ENCODE measurements at regions of chr6 and their contacts with region 1.

Region 1: DNA sequence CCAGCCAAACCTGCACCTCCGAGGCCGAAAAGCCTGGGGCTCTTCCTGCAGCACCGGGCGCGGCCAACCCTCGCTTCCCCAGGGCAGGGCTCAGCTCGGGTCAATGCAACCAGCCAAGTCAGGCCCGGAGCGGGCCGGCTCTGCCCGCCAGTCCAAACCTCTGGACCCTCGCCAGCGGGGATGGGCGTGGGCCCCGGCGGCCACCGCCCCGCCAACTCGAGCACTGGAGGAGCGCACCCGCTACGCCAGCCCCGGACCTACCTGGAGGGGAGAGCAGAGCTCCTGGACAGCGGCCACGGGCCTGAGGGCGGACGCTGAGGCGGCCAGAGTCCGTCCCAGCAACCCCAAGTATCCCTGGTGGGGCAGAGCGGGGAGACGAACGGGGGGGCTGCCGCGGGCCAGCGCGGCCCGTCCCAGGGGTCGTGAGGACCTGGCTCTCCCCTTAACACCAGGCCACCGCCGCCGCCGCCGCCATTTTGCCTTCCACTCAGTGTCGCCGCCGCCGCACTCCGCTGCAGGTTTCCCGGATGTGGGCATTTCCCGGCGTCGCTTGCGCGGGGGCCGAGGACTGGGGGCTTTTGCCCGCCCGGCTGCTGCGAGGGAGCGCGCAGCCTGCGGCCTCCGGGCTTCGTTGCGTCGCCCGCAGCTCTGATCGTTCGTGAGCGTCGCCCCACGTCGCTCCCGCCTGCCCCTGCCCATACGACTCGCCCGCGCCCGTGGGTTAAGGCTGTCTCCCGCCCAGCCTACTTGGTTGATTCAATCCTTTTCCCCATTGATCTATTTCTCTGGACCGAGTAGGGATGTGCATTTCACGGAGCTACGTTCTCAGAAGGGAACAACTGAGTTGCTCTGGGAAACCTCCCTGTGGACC is at the start of gene LATS1:
- H3K4me3 ChIP-seq: peak within 1 kb of the TSS; percentile 98
- H3K27ac ChIP-seq: peak within 1 kb of the TSS; percentile 92
- H3K4me1 ChIP-seq: no peaks in the 10 kb centered on the region
- CTCF ChIP-seq: peak; percentile 35; the same call in 1 of the 2 replicates

Region 2: DNA sequence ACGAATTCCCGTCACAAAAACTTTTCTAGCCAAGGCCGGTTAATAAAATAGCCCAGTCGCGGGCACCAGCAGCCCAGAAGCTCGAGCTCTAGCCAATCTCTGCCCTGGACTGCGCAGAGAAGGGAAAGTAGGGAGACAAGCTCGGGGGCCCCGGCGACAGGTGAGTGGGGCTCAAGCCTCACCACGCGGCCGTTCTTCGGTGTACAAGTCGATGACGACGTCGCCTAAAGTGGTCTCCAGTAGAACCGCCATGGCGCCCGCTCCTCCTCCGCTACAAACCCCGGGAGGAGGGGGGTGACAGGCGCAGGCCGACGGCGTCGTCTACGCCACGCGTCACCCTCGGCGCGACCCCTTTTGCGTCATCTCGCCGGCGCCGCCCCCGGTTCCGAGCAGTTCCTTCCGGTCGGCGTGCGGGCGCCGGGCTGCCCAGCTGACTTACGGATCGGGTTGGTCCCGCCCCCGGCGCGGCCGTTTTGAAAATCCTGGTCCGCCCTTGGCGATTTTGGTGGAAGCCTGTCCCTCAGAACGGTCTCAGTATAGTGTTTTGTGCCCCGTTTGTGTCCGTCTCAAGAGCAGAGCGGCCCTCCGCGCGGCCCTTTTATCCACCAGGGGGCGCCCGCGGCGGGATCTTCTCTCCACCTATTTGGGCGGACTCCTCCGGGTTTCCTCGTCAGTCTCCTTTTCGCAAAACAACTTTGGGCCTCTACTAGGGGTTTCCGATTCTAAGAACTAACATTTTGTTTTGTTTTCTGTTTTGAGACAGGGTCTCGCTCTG is 171.9 kb before region 1 on chr6 and contains the start of gene PPIL4:
- CTCF ChIA-PET with region 1: interaction called, 3 read pairs
- POLR2A ChIA-PET with region 1: interaction called, 11 read pairs
- H3K4me3 ChIP-seq: peak within 1 kb of the TSS; percentile 79
- H3K27ac ChIP-seq: peak within 1 kb of the TSS; percentile 79
- H3K4me1 ChIP-seq: peaks cover 3% of the 10 kb centered on the region; the same call in 1 of the 2 replicates
- CTCF ChIP-seq: peak; percentile 82

Region 3: GRCh38 chr6:149565527-149566409 is 152.1 kb before region 1 on chr6 and contains the start of gene GINM1:
- CTCF ChIA-PET with region 1: interaction called, 5 read pairs
- POLR2A ChIA-PET with region 1: interaction called, 12 read pairs
- H3K4me3 ChIP-seq: peak within 1 kb of the TSS; percentile 83
- H3K27ac ChIP-seq: peak within 1 kb of the TSS; percentile 90
- H3K4me1 ChIP-seq: peaks cover 22% of the 10 kb centered on the region; the same call in 1 of the 2 replicates
- CTCF ChIP-seq: peak; percentile 75

Region 4: DNA sequence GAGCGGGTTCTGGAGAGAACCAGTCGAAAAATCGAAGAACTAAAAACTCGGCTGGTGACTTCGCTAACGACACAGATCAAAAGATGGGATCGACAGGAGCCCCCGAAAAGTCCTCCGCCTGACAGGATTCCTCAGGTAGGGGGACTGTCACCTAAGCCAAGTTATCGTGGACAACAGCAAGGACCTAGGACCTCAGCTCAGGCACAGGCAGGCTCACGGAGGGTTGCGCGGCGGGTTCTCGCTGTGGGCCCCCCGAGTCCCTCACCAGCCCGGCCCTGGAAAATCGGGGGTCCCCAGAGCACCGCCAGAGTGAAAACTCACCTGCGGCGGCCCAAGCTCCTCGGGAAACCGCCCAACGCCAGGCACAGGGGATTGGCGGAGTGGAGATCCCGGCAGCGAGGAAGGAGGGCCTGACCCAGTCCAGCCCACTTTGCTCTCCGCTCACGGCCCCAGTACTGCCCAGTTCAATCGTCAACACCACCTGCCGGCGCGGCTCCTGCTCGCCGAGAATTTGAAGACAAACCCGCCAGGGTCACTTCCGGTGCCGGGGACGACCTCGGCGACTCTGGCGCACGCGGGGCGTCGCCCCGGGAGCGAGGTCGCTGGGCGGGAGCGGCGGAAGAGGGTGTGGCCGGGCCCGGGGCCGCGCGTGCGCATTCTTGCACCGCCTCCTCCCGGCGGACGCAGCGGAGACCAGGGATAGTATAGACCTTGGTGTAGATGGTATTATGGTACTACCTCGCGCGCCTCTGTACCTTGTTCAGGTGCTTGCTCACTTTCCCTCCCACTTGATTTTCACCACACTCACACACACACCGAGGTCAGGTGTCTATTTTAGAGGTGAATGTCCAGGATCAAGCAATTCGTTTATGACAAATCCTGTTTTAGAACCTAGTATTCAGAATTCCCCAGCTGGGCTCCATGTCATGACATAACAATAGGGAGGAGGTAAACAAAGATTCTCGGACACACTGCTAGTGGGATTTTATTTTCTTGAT is 69.4 kb before region 1 on chr6 and contains the start of gene KATNA1:
- CTCF ChIA-PET with region 1: no interaction called
- POLR2A ChIA-PET with region 1: interaction called, 17 read pairs
- H3K4me3 ChIP-seq: peak within 1 kb of the TSS; percentile 87
- H3K27ac ChIP-seq: peak within 1 kb of the TSS; percentile 73
- H3K4me1 ChIP-seq: peaks cover 7% of the 10 kb centered on the region
- CTCF ChIP-seq: peak; percentile 60; the same call in 1 of the 2 replicates

Region 5: DNA sequence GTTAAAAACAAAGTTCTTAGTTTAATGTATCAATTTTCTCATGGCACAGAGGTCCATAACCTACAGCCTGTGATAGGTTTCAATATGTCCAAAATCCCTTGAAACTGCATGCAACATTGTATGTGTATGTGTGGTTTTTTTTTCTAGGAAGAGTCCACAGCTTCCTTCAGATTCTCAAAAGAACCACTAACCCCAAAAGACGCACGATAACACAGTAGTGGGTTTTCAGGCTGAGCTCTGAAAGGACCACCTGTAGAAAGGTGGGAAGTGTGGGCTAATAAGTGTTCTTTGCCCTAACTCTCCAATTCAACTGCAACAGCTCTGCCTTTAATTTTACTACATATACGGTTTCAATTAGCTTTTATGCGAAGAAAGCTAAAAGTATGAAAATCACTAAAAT is 57.8 kb before region 1 on chr6:
- CTCF ChIA-PET with region 1: no interaction called
- POLR2A ChIA-PET with region 1: no interaction called
- H3K4me3 ChIP-seq: no peak overlapping the region
- H3K27ac ChIP-seq: no peak overlapping the region
- H3K4me1 ChIP-seq: no peaks in the 10 kb centered on the region
- CTCF ChIP-seq: no peak

Region 6: GRCh38 chr6:149701714-149702113 is 16.1 kb before region 1 on chr6:
- CTCF ChIA-PET with region 1: interaction called, 7 read pairs
- POLR2A ChIA-PET with region 1: interaction called, 13 read pairs
- H3K4me3 ChIP-seq: no peak overlapping the region
- H3K27ac ChIP-seq: no peak overlapping the region
- H3K4me1 ChIP-seq: peaks cover 9% of the 10 kb centered on the region; the same call in 1 of the 2 replicates
- CTCF ChIP-seq: no peak

Region 7: GRCh38 chr6:149746147-149746946 is 28.5 kb after region 1 on chr6 and contains the start of gene NUP43:
- CTCF ChIA-PET with region 1: interaction called, 4 read pairs
- POLR2A ChIA-PET with region 1: interaction called, 35 read pairs
- H3K4me3 ChIP-seq: peak within 1 kb of the TSS; percentile 78
- H3K27ac ChIP-seq: peak within 1 kb of the TSS; percentile 86
- H3K4me1 ChIP-seq: no peaks in the 10 kb centered on the region
- CTCF ChIP-seq: peak; percentile 85

Region 8: DNA sequence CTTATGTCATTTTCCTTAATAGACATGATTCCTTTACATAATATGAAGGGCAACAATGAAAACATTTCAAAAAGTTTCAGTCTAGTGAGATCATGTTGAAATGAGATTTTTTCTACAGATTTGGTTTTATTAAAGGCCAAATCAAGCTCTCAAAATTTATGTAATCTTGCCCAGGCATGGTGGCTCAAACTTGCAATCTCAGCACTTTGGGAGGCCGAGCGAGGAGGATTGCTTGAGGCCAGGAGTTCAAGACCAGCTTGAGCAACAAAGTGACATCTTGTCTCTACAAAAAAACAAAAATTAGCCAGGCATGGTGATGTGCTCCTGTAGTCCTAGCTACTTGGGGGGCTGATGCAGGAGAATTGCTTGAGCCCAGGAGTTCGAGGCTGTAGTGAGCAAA is 95.5 kb after region 1 on chr6:
- CTCF ChIA-PET with region 1: no interaction called
- POLR2A ChIA-PET with region 1: no interaction called
- H3K4me3 ChIP-seq: no peak overlapping the region
- H3K27ac ChIP-seq: no peak overlapping the region
- H3K4me1 ChIP-seq: no peaks in the 10 kb centered on the region
- CTCF ChIP-seq: no peak

Region 9: DNA sequence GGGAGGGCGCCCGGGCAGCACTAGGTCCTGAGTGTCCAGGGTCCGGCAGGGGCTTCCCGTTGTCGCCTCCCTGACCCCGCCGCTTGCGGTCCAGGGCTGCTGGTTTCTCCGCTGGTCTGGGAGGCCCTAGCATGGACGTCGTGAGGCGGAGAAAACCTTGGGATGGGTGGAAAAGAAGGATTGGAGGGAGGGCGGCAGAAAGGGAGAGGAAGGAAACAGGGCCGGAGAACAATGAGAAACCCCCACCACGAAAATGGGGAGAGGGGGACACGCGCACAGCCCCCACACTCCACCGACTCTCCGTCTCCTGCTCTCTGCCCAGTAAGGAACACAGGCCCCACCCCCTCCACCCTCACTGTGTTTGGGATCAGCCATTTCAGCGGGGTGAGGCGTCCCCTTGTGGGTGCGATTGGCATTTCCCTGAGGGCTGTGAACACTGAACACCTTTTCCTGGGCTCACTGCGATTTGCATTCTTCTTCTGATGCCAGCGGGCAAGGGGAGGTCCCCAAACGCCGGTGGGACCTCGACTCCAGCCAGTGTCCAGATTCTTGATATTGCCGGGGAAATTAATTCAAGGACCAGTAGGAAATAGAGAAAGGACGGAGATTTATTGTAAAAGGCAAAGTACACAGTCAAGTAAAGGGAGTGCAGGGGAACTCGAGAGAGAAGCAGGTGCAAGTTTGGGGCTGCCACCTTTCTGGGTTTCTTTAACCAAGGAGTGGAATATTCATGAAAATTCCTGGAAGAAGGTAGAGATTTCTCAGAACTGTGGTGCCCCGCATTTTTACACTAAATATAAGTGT is 208.4 kb after region 1 on chr6:
- CTCF ChIA-PET with region 1: no interaction called
- POLR2A ChIA-PET with region 1: no interaction called
- H3K4me3 ChIP-seq: peak overlapping the region; percentile 38
- H3K27ac ChIP-seq: no peak overlapping the region
- H3K4me1 ChIP-seq: no peaks in the 10 kb centered on the region
- CTCF ChIP-seq: peak; percentile 86

Measured in HEK293 (cell line).